ENCODE measurements at regions of chr1 and their contacts with region 1.

Region 1: GRCh38 chr1:37946703-37947360 is at the start of gene INPP5B:
- DNase-seq: peak; percentile 26 to 85 (median 60)
- ATAC-seq: peak; percentile 98 to 99
- H3K4me3 Mint-ChIP-seq: peak within 1 kb of the TSS; percentile 88 to 97 (median 96)
- H3K27ac Mint-ChIP-seq: peak within 1 kb of the TSS; percentile 83 to 94 (median 90)
- H3K4me1 Mint-ChIP-seq: peaks cover 9 to 25% (median 18%) of the 10 kb centered on the region in 4 donors
- H3K27me3 Mint-ChIP-seq: no peaks in the 10 kb centered on the region
- polyA plus RNA-seq, gene INPP5B: 11.3 to 22.0 (median 18.5) TPM

Region 2: DNA sequence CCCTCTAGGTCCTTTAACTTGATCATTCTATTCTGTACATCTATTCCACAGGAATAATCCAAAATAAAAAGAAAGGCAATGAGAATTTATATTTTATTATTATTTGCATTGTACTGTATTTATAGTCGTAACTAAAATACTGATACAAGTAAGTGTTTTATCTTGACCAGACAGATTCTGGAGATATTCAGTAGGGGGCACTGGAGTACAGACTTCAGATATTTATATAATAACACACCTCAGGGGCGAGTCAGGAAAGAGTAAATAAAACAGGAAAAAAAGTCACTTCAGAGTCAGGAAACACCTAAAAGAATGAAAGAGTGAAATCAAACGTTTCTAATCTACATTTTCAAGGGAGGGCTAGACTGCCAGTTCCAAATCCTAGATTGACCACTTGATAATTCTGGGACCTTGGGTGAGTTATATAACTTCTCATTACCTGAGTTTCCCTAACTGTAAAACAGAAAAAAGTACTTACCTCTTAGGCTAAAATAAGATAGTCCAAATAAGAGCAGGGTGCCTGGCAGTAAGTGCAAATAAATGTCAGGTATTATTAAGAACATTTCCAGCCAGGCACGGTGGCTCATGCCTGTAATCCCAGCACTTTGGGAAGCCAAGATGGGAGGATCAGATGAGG is 56.3 kb before region 1 on chr1:
- POLR2A ChIA-PET with region 1: no interaction called
- DNase-seq: peak in 5 of 10 donors; percentile 10 to 64 (median 37)
- ATAC-seq: peak; percentile 65 to 76
- H3K4me3 Mint-ChIP-seq: no peak overlapping the region
- H3K27ac Mint-ChIP-seq: peak overlapping the region in 9 of 10 donors; percentile 11 to 81 (median 48)
- H3K4me1 Mint-ChIP-seq: peaks cover 3 to 16% (median 7%) of the 10 kb centered on the region in 4 donors
- H3K27me3 Mint-ChIP-seq: no peaks in the 10 kb centered on the region

Region 3: GRCh38 chr1:37931361-37932158 is 15.3 kb before region 1 on chr1:
- POLR2A ChIA-PET with region 1: interaction called, 10 read pairs
- DNase-seq: peak; percentile 93 to 97 (median 96)
- ATAC-seq: peak; percentile 97 to 99
- H3K4me3 Mint-ChIP-seq: peak overlapping the region; percentile 86 to 99 (median 94)
- H3K27ac Mint-ChIP-seq: peak overlapping the region; percentile 75 to 99 (median 90)
- H3K4me1 Mint-ChIP-seq: peaks cover 18 to 52% (median 46%) of the 10 kb centered on the region in 4 donors
- H3K27me3 Mint-ChIP-seq: no peaks in the 10 kb centered on the region

Measured in naive thymus-derived CD8-positive, alpha-beta T cell (primary cell).